GM12878 (cell line): ENCODE measurements at regions of chr11 and their contacts with region 1.

Region 1: GRCh38 chr11:62855571-62856332 is 16.4 kb upstream of the WDR74 start:
- DNase-seq: peak; percentile 97
- ATAC-seq: peak; percentile 86
- H3K4me3 ChIP-seq: peak overlapping the region; percentile 98
- H3K27ac ChIP-seq: peak overlapping the region; percentile 97
- H3K4me1 ChIP-seq: peaks cover 20% of the 10 kb centered on the region
- H3K27me3 ChIP-seq: no peaks in the 10 kb centered on the region
- CTCF ChIP-seq: no peak
- EP300 ChIP-seq: peak in 1 of 2 experiments; percentile 42; a peak in 2 of 4 replicates
- POLR2A ChIP-seq: peak; percentile 99
- RAD21 ChIP-seq: no peak

Region 2: DNA sequence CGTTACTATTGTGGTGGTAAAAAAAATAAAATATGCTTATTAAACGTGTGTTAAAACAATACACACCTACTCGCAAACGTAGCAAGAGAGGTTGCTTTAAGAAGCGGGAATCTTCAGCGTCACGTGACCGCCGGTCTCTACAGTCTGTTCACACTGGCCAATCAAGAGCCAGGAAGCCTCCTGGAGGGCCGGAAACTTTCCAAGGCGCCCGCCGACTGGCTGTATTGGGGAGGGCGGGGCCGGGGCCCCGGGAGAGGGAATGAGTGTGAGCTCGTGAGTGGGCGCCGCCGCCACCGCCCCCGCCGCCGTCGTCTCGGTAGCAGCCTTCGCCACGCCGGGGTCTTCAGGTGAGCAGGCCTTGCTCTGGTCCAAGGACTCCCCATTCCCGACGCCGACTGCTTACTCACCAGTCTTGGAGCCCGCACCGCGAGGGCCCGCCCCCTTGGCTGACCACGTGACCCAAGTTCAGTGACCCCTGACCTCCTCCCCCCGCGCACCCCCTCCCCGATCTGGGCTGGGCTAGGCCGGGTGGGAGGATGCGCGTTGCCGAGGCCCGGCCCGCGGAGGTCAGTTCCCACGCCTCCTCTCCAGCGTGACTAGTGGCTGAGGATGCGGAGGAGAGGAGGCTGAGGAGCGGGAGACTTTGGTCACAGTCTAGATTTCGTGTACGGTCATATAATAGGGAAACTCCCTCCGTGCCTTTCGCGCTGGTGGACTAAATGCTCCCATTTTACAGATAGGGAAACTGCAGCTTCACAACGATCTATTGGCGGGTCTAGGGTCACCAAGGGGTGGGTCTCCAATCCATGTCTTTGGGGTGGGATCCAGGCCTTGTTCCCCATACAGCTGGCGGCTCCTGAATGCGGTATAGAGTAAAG is 84.4 kb before region 1 on chr11 and contains the start of gene TAF6L:
- CTCF ChIA-PET with region 1: interaction called, 31 read pairs
- POLR2A ChIA-PET with region 1: interaction called, 18 read pairs
- RAD21 ChIA-PET with region 1: interaction called, 3 read pairs
- SMC1A ChIA-PET with region 1: interaction called, 4 read pairs
- in situ Hi-C with region 1: no loop called
- intact Hi-C with region 1: no loop called
- DNase-seq: peak; percentile 77
- ATAC-seq: peak; percentile 92
- H3K4me3 ChIP-seq: peak within 1 kb of the TSS; percentile 86
- H3K27ac ChIP-seq: peak within 1 kb of the TSS; percentile 82
- H3K4me1 ChIP-seq: peaks cover 17% of the 10 kb centered on the region
- H3K27me3 ChIP-seq: no peaks in the 10 kb centered on the region
- CTCF ChIP-seq: no peak
- EP300 ChIP-seq: 0 out of 4 replicates have a peak, but pooled peaks of 1 of the 2 experiments have one; percentile 6
- POLR2A ChIP-seq: peak; percentile 83
- RAD21 ChIP-seq: no peak
- polyA plus RNA-seq, gene TAF6L: 0.15 to 0.39 TPM

Region 3: GRCh38 chr11:62831520-62832335 is 24.0 kb before region 1 on chr11 and contains the start of gene STX5:
- CTCF ChIA-PET with region 1: interaction called, 6 read pairs
- POLR2A ChIA-PET with region 1: interaction called, 50 read pairs
- RAD21 ChIA-PET with region 1: interaction called, 5 read pairs
- SMC1A ChIA-PET with region 1: interaction called, 5 read pairs
- in situ Hi-C with region 1: no loop called
- intact Hi-C with region 1: no loop called
- DNase-seq: peak; percentile 93
- ATAC-seq: peak; percentile 93
- H3K4me3 ChIP-seq: peak within 1 kb of the TSS; percentile 99
- H3K27ac ChIP-seq: peak within 1 kb of the TSS; percentile 84
- H3K4me1 ChIP-seq: peaks cover 8% of the 10 kb centered on the region
- H3K27me3 ChIP-seq: no peaks in the 10 kb centered on the region
- CTCF ChIP-seq: no peak
- EP300 ChIP-seq: 0 out of 4 replicates have a peak, but pooled peaks of 1 of the 2 experiments have one; percentile 16
- POLR2A ChIP-seq: peak; percentile 88
- RAD21 ChIP-seq: no peak
- polyA plus RNA-seq, gene STX5: 3.8 to 4.5 TPM

Region 4: DNA sequence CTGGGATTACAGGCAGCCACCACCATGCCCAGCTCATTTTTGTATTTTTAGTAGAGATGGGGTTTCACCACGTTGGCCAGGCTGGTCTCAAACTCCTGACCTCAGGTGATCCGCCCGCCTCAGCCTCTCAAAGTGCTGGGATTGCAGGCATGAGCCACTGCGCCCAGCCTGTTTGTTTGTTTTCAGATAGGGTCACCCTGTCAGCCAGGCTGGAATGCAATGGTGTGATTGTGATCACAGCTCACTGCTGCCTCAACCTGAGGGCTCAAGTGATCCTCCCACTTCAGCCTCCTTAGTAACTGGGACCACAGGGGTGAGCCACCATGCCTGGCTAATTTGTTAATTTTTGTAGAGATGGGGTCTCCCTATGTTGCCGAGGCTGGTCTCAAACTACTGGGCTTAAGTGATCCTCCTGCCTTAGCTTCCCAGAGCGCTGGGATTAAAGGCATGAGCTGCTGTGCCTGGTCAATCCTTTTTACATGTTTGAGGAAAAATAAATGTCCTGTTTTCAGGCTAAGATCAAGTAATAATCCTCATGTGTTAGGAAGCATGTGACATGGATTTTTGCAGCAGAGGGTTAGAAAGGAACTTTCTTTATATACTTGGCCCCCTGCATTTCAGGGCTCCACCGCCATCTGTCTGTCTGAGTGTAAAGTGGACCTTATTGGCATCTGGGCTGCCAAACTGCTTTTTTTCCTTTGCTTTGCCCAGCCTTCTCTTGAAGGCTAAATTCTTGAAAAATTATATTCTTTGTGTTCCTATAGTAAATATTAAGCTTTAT is 20.1 kb after region 1 on chr11:
- CTCF ChIA-PET with region 1: interaction called, 38 read pairs
- POLR2A ChIA-PET with region 1: interaction called, 41 read pairs
- RAD21 ChIA-PET with region 1: interaction called, 9 read pairs
- SMC1A ChIA-PET with region 1: interaction called, 8 read pairs
- in situ Hi-C with region 1: no loop called
- intact Hi-C with region 1: no loop called
- DNase-seq: no peak
- ATAC-seq: no peak
- H3K4me3 ChIP-seq: no peak overlapping the region
- H3K27ac ChIP-seq: no peak overlapping the region
- H3K4me1 ChIP-seq: peaks cover 12% of the 10 kb centered on the region
- H3K27me3 ChIP-seq: no peaks in the 10 kb centered on the region
- CTCF ChIP-seq: 0 out of 6 replicates have a peak, but pooled peaks of 1 of the 3 experiments have one; percentile 9
- EP300 ChIP-seq: no peak
- POLR2A ChIP-seq: no peak
- RAD21 ChIP-seq: no peak

Region 5: DNA sequence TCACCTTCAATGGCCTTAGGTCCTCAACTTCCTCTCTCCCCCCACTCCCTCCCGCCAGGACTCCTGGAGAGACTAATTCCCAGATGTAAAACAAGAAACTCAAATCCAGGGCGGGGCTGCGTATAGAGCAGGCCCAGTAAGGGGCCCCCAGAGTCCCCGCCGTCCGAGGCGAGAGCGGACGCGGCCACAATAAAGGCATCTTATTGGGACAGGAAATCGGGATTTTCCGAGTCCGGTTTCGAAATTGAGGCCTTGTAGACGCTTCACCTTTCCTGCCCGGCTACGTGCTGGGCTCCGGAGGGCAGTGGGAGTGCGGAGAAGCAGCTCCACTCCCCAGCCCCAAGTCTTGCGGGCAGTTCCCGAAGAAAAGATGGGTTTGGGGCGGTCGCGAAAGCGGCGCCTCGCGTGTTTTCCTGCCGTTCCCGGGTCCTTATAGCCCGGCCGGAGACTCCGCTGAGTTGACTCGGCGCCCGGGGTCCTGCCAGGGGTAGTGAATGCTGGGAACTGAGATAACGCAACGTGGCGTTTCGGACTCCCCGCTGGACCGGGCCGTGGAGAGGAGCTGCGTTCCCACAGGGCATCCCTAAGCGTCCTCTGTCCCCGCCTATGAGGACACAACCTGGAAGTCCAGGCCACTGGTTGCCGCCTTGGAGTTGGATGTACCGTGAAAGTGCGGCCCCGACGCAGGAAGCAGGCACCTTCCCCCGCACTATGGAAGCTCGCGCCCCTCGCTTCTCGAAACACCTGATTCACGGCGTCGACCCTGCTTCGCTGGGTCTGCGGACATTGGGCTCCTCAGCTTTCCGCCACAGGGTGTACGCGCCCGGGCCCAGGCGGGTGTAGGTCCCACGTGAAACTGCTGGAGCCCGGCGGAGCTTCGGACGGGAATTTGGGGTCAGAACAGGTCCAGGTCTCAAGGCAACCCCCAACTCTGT is 70.3 kb after region 1 on chr11:
- CTCF ChIA-PET with region 1: no interaction called
- POLR2A ChIA-PET with region 1: no interaction called
- RAD21 ChIA-PET with region 1: no interaction called
- SMC1A ChIA-PET with region 1: no interaction called
- in situ Hi-C with region 1: no loop called
- intact Hi-C with region 1: no loop called
- DNase-seq: no peak
- ATAC-seq: no peak
- H3K4me3 ChIP-seq: no peak overlapping the region
- H3K27ac ChIP-seq: no peak overlapping the region
- H3K4me1 ChIP-seq: peaks cover 19% of the 10 kb centered on the region
- H3K27me3 ChIP-seq: peaks cover 12 to 22% of the 10 kb centered on the region in 2 experiments
- CTCF ChIP-seq: no peak
- EP300 ChIP-seq: no peak
- POLR2A ChIP-seq: no peak
- RAD21 ChIP-seq: no peak

Region 6: GRCh38 chr11:63369165-63369970 is 513.6 kb after region 1 on chr11 and contains the start of gene SLC22A9:
- CTCF ChIA-PET with region 1: no interaction called
- POLR2A ChIA-PET with region 1: no interaction called
- RAD21 ChIA-PET with region 1: no interaction called
- SMC1A ChIA-PET with region 1: no interaction called
- in situ Hi-C with region 1: no loop called
- intact Hi-C with region 1: no loop called
- DNase-seq: no peak
- ATAC-seq: no peak
- H3K4me3 ChIP-seq: no peak within 1 kb of the TSS
- H3K27ac ChIP-seq: no peak within 1 kb of the TSS
- H3K4me1 ChIP-seq: no peaks in the 10 kb centered on the region
- H3K27me3 ChIP-seq: peaks cover 0 to 4% of the 10 kb centered on the region in 2 experiments; a peak in 2 of 4 replicates
- CTCF ChIP-seq: no peak
- EP300 ChIP-seq: no peak
- POLR2A ChIP-seq: no peak
- RAD21 ChIP-seq: no peak
- polyA plus RNA-seq, gene SLC22A9: not detected

Region 7: DNA sequence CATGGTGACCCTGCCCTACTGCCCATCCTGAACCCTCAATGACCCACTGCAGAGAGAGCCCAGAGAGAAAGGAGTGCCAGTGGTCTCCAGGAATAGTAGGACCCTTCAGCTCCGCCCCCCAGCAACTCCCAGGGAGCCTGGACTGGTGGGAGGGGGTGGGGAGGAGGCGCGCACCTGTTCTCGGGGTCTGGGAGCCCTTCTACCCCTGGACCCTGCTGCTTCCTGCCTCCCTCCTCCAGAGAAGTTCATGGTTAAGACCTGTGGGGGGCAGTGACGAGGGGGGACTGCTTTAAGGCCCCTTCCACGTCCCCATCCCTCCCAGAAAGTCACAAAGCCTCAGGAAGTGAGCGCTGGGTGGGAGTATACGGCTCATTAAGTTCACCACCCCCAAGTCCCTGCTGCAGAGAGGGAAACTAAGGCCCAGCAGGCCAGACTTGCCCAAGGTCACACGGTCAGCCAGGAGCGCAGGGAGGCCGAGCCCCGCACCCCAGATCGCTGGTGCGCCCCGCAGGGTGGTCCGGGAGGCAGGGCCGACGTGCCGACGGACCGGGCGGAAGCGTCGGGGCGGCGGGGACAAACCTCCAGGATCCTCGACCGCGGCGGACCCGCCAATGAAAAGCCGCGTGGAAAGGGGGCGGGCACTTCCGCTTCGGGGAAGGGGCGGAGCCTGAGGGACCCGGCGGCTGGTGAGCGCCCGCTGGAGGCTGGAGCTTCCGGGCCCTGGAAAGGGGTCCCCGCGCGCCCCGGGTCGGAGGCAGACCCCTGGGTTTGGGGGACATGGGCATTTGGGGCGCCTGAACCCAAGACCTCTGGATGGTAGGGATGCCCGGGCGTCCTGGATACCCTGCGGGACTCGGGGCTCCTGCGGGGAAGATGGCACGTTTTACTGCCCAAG is 1370.1 kb after region 1 on chr11 and contains the starts of genes NUDT22 and TRPT1:
- CTCF ChIA-PET with region 1: no interaction called
- POLR2A ChIA-PET with region 1: interaction called, 14 read pairs
- RAD21 ChIA-PET with region 1: no interaction called
- SMC1A ChIA-PET with region 1: no interaction called
- in situ Hi-C with region 1: no loop called
- intact Hi-C with region 1: no loop called
- DNase-seq: no peak
- ATAC-seq: peak; percentile 80
- H3K4me3 ChIP-seq: peak within 1 kb of the TSS; percentile 90
- H3K27ac ChIP-seq: peak within 1 kb of the TSS; percentile 96
- H3K4me1 ChIP-seq: peaks cover 18% of the 10 kb centered on the region
- H3K27me3 ChIP-seq: no peaks in the 10 kb centered on the region
- CTCF ChIP-seq: peak; percentile 25 to 48 (median 36); a peak in 4 of 6 replicates
- EP300 ChIP-seq: no peak
- POLR2A ChIP-seq: peak; percentile 71
- RAD21 ChIP-seq: no peak; the same call in 1 of the 2 replicates
- polyA plus RNA-seq, gene NUDT22: 6.7 to 20.9 TPM
- polyA plus RNA-seq, gene TRPT1: 7.1 to 21.3 TPM